HCT116 (cell line): ENCODE measurements at regions of chr1 and their contacts with region 1.

Region 1: GRCh38 chr1:26787706-26788514 is at the start of gene PIGV:
- DNase-seq: peak; percentile 55
- ATAC-seq: peak; percentile 82
- H3K4me3 ChIP-seq: peak within 1 kb of the TSS; percentile 55 to 94
- H3K27ac ChIP-seq: peak within 1 kb of the TSS; percentile 98
- H3K4me1 ChIP-seq: peaks cover 21 to 50% of the 10 kb centered on the region in 2 experiments
- H3K27me3 ChIP-seq: no peaks in the 10 kb centered on the region
- CTCF ChIP-seq: no peak
- POLR2A ChIP-seq: no peak
- RAD21 ChIP-seq: no peak
- total RNA-seq, gene PIGV: 13.2 TPM

Region 2: GRCh38 chr1:26500488-26501175 is 287.3 kb before region 1 on chr1:
- CTCF ChIA-PET with region 1: interaction called, 15 read pairs
- POLR2A ChIA-PET with region 1: no interaction called
- RAD21 ChIA-PET with region 1: no interaction called
- intact Hi-C with region 1: loop called (anchors 1 kb)
- DNase-seq: peak; percentile 48
- ATAC-seq: peak; percentile 77
- H3K4me3 ChIP-seq: peak overlapping the region; percentile 68 to 70
- H3K27ac ChIP-seq: peak overlapping the region; percentile 97
- H3K4me1 ChIP-seq: peaks cover 9 to 25% of the 10 kb centered on the region in 2 experiments; a peak in 3 of 4 replicates
- H3K27me3 ChIP-seq: no peaks in the 10 kb centered on the region
- CTCF ChIP-seq: no peak
- POLR2A ChIP-seq: no peak
- RAD21 ChIP-seq: no peak

Region 3: DNA sequence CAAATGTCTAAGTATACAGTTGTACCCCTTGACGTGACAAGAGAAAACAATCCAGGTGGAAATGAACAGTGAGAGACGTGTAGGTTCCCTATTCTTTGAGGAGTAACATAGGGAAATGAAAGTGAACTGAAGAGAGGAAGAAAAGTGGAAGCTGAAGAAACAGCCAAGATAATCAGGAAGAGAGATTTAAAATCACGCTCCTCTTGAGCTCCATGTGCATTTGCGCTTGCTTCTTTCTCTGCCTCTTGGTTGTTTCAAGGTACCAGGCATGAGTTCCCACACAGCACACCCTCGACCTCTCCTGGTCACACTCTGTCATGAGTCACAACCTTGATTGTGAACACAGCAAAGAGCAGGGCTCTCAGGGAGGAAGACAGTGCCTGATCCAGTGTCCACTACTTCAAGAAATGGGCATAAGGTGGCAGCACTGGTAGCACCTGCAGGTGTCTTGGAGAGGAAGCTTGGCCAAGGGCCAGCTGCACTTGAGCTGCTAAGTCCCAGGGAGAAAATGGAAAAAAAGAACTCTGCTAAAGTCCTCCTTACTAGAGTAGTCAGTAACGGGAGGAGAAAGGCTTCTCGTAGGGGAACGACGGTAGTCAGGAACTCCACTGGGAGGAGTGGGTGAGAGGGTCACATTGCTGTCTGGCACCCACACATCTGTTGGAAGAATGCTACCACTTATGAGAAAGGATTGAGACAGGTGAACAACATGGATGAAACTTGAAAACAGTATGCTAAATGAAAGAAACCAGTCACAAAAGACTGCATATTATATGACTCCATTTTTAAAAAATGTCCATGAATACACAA is 110.4 kb before region 1 on chr1:
- CTCF ChIA-PET with region 1: interaction called, 30 read pairs
- POLR2A ChIA-PET with region 1: interaction called, 5 read pairs
- RAD21 ChIA-PET with region 1: interaction called, 6 to 7 read pairs
- intact Hi-C with region 1: loop called (anchors 1 kb)
- DNase-seq: peak; percentile 94
- ATAC-seq: peak; percentile 100
- H3K4me3 ChIP-seq: peak overlapping the region in 1 of 2 experiments; percentile 24; a peak in 2 of 4 replicates
- H3K27ac ChIP-seq: no peak overlapping the region
- H3K4me1 ChIP-seq: peaks cover 0 to 13% of the 10 kb centered on the region in 2 experiments; a peak in 2 of 4 replicates
- H3K27me3 ChIP-seq: no peaks in the 10 kb centered on the region
- CTCF ChIP-seq: peak; percentile 83 to 97 (median 86)
- POLR2A ChIP-seq: no peak
- RAD21 ChIP-seq: peak; percentile 91

Region 4: GRCh38 chr1:26754086-26754874 is 33.6 kb before region 1 on chr1:
- CTCF ChIA-PET with region 1: no interaction called
- POLR2A ChIA-PET with region 1: no interaction called
- RAD21 ChIA-PET with region 1: no interaction called
- intact Hi-C with region 1: no loop called
- DNase-seq: no peak
- ATAC-seq: peak; percentile 40; the same call in 1 of the 2 replicates
- H3K4me3 ChIP-seq: no peak overlapping the region
- H3K27ac ChIP-seq: no peak overlapping the region
- H3K4me1 ChIP-seq: peaks cover 5 to 41% of the 10 kb centered on the region in 2 experiments
- H3K27me3 ChIP-seq: no peaks in the 10 kb centered on the region
- CTCF ChIP-seq: no peak
- POLR2A ChIP-seq: no peak
- RAD21 ChIP-seq: no peak

Region 5: GRCh38 chr1:26771643-26772321 is 16.1 kb before region 1 on chr1:
- CTCF ChIA-PET with region 1: interaction called, 5 read pairs
- POLR2A ChIA-PET with region 1: interaction called, 13 read pairs
- RAD21 ChIA-PET with region 1: interaction called in 1 of 2 experiments, 3 read pairs
- intact Hi-C with region 1: no loop called
- DNase-seq: peak; percentile 52
- ATAC-seq: peak; percentile 90
- H3K4me3 ChIP-seq: peak overlapping the region in 1 of 2 experiments; percentile 26; a peak in 2 of 4 replicates
- H3K27ac ChIP-seq: peak overlapping the region; percentile 52
- H3K4me1 ChIP-seq: peaks cover 21 to 59% of the 10 kb centered on the region in 2 experiments
- H3K27me3 ChIP-seq: no peaks in the 10 kb centered on the region
- CTCF ChIP-seq: no peak
- POLR2A ChIP-seq: no peak
- RAD21 ChIP-seq: no peak

Region 6: DNA sequence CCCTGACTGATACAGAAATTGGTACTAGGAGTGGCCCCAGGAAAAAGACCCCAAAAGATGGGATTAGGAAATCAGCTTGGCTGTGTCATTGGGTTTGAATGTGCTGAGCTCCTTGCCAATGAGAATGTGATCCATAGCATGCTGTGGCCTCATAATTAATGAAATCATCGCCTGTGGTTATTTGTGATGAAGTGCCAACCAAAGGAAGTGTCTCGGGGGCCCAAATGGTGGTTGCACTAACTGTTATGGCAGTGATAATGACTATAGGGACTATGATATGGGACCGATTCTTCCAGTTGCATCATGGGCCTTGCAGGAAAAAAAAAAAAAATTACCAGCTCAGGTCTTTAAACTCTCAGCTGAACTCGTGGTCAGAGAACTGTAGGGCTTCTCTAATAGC is 23.1 kb after region 1 on chr1:
- CTCF ChIA-PET with region 1: interaction called, 11 read pairs
- POLR2A ChIA-PET with region 1: no interaction called
- RAD21 ChIA-PET with region 1: no interaction called
- intact Hi-C with region 1: no loop called
- DNase-seq: no peak
- ATAC-seq: no peak
- H3K4me3 ChIP-seq: no peak overlapping the region
- H3K27ac ChIP-seq: no peak overlapping the region
- H3K4me1 ChIP-seq: peaks cover 0 to 14% of the 10 kb centered on the region in 2 experiments; a peak in 1 of 4 replicates
- H3K27me3 ChIP-seq: no peaks in the 10 kb centered on the region
- CTCF ChIP-seq: no peak
- POLR2A ChIP-seq: no peak
- RAD21 ChIP-seq: no peak